ENCODE measurements at regions of chr4 and their contacts with region 1.

Region 1: GRCh38 chr4:183504064-183504929 is 561 bp upstream of the ING2 start:
- DNase-seq: peak; percentile 89 to 98 (median 93)
- ATAC-seq: peak; percentile 85
- H3K4me3 ChIP-seq: peak overlapping the region; percentile 92
- H3K27ac ChIP-seq: peak overlapping the region; percentile 93
- H3K4me1 ChIP-seq: peaks cover 23 to 24% of the 10 kb centered on the region in 2 experiments
- H3K27me3 ChIP-seq: no peaks in the 10 kb centered on the region
- CTCF ChIP-seq: peak in 2 of 3 experiments; percentile 57 to 67; a peak in 4 of 6 replicates
- EP300 ChIP-seq: no peak; the same call in 1 of the 2 replicates
- POLR2A ChIP-seq: peak; percentile 81
- RAD21 ChIP-seq: peak; percentile 44 to 45

Region 2: GRCh38 chr4:183471946-183472708 is 32.2 kb before region 1 on chr4:
- CTCF ChIA-PET with region 1: no interaction called
- POLR2A ChIA-PET with region 1: no interaction called
- in situ Hi-C with region 1: no loop called
- intact Hi-C with region 1: loop called (anchors 1 kb)
- DNase-seq: peak; percentile 75 to 84 (median 78)
- ATAC-seq: peak; percentile 99
- H3K4me3 ChIP-seq: no peak overlapping the region
- H3K27ac ChIP-seq: no peak overlapping the region
- H3K4me1 ChIP-seq: no peaks in the 10 kb centered on the region
- H3K27me3 ChIP-seq: no peaks in the 10 kb centered on the region
- CTCF ChIP-seq: peak; percentile 66 to 85 (median 83)
- EP300 ChIP-seq: no peak
- POLR2A ChIP-seq: no peak
- RAD21 ChIP-seq: peak; percentile 84

Region 3: GRCh38 chr4:183515411-183515810 is 11.1 kb after region 1 on chr4:
- CTCF ChIA-PET with region 1: interaction called, 3 read pairs
- POLR2A ChIA-PET with region 1: interaction called, 10 read pairs
- in situ Hi-C with region 1: no loop called
- intact Hi-C with region 1: no loop called
- DNase-seq: no peak
- ATAC-seq: no peak
- H3K4me3 ChIP-seq: no peak overlapping the region
- H3K27ac ChIP-seq: no peak overlapping the region
- H3K4me1 ChIP-seq: no peaks in the 10 kb centered on the region
- H3K27me3 ChIP-seq: no peaks in the 10 kb centered on the region; a peak in 1 of 5 replicates
- CTCF ChIP-seq: no peak
- EP300 ChIP-seq: no peak
- POLR2A ChIP-seq: no peak
- RAD21 ChIP-seq: no peak

Region 4: GRCh38 chr4:183602557-183603027 is 98.3 kb after region 1 on chr4:
- CTCF ChIA-PET with region 1: no interaction called
- POLR2A ChIA-PET with region 1: no interaction called
- in situ Hi-C with region 1: no loop called
- intact Hi-C with region 1: loop called (anchors 2 kb)
- DNase-seq: peak in 1 of 4 experiments; percentile 28
- ATAC-seq: 0 out of 3 replicates have a peak, but pooled peaks have one; percentile 41
- H3K4me3 ChIP-seq: no peak overlapping the region
- H3K27ac ChIP-seq: no peak overlapping the region
- H3K4me1 ChIP-seq: no peaks in the 10 kb centered on the region; a peak in 1 of 5 replicates
- H3K27me3 ChIP-seq: peaks cover 2 to 15% of the 10 kb centered on the region in 2 experiments; a peak in 3 of 5 replicates
- CTCF ChIP-seq: peak; percentile 26 to 55 (median 27); a peak in 3 of 6 replicates
- EP300 ChIP-seq: no peak
- POLR2A ChIP-seq: no peak
- RAD21 ChIP-seq: peak; percentile 53 to 58

Region 5: GRCh38 chr4:183659029-183659871 is 155.0 kb after region 1 on chr4 and contains the starts of genes RWDD4 and TRAPPC11:
- CTCF ChIA-PET with region 1: no interaction called
- POLR2A ChIA-PET with region 1: no interaction called
- in situ Hi-C with region 1: no loop called
- intact Hi-C with region 1: loop called (anchors 5 kb)
- DNase-seq: peak; percentile 96 to 98 (median 98)
- ATAC-seq: peak; percentile 99
- H3K4me3 ChIP-seq: peak within 1 kb of the TSS; percentile 95
- H3K27ac ChIP-seq: peak within 1 kb of the TSS; percentile 75
- H3K4me1 ChIP-seq: peaks cover 2 to 6% of the 10 kb centered on the region in 2 experiments; a peak in 2 of 5 replicates
- H3K27me3 ChIP-seq: no peaks in the 10 kb centered on the region
- CTCF ChIP-seq: 0 out of 6 replicates have a peak, but pooled peaks of 1 of the 3 experiments have one; percentile 5
- EP300 ChIP-seq: no peak
- POLR2A ChIP-seq: peak; percentile 84
- RAD21 ChIP-seq: no peak
- polyA plus RNA-seq, gene RWDD4: 8.4 to 11.7 TPM
- polyA plus RNA-seq, gene TRAPPC11: 11.6 to 12.0 TPM

Region 6: GRCh38 chr4:183738081-183738673 is 233.9 kb after region 1 on chr4:
- CTCF ChIA-PET with region 1: no interaction called
- POLR2A ChIA-PET with region 1: no interaction called
- in situ Hi-C with region 1: no loop called
- intact Hi-C with region 1: no loop called
- DNase-seq: no peak
- ATAC-seq: no peak
- H3K4me3 ChIP-seq: no peak overlapping the region
- H3K27ac ChIP-seq: no peak overlapping the region
- H3K4me1 ChIP-seq: no peaks in the 10 kb centered on the region; a peak in 2 of 5 replicates
- H3K27me3 ChIP-seq: peaks cover 7 to 9% of the 10 kb centered on the region in 2 experiments; a peak in 4 of 5 replicates
- CTCF ChIP-seq: no peak
- EP300 ChIP-seq: no peak
- POLR2A ChIP-seq: no peak
- RAD21 ChIP-seq: no peak

Region 7: DNA sequence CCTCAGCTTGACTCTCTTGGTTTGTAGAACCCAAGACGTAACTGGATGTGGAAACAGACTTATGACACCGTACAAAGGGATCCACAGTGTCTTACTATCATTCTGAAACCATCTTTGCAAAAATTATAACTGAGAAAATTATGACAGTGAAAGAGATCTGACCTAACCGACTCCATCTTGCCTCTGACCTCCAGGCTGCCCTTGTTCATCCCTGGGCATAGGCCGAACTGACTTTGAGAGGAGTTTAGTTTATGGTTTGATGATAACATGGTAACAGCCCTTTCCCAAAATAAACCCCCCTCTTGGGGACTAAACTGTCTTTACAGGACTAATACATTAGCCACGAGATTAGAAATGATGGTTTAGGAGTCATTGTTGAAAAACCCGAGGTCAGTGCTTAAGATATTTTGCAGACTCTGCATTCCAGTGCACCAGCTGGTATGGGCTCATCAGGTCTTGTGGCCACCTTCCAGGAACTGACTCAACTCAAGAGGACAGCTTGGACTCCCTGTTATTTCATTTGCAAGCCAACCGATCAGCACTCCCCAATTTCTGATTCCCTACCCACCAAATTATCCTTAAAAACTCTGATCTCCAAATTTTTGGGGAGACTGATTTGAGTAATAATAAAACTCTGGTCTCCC is 1095.3 kb after region 1 on chr4:
- CTCF ChIA-PET with region 1: no interaction called
- POLR2A ChIA-PET with region 1: no interaction called
- in situ Hi-C with region 1: no loop called
- intact Hi-C with region 1: no loop called
- DNase-seq: no peak
- ATAC-seq: no peak
- H3K4me3 ChIP-seq: no peak overlapping the region
- H3K27ac ChIP-seq: no peak overlapping the region
- H3K4me1 ChIP-seq: peaks cover 7 to 27% of the 10 kb centered on the region in 2 experiments
- H3K27me3 ChIP-seq: no peaks in the 10 kb centered on the region
- CTCF ChIP-seq: no peak
- EP300 ChIP-seq: no peak
- POLR2A ChIP-seq: no peak
- RAD21 ChIP-seq: no peak

Measured in K562 (cell line).